Activated CD4-positive, alpha-beta memory T cell treated with anti-CD3 and anti-CD28 coated beads for 36 hours (primary cell): ENCODE measurements at regions of chr12 and their contacts with region 1.

Region 1: GRCh38 chr12:68565375-68565903 is 45.3 kb upstream of the RAP1B start:
- DNase-seq: no peak
- H3K4me3 Mint-ChIP-seq: no peak overlapping the region
- H3K27ac Mint-ChIP-seq: peak overlapping the region; percentile 42
- H3K4me1 Mint-ChIP-seq: peaks cover 21% of the 10 kb centered on the region
- H3K27me3 Mint-ChIP-seq: no peaks in the 10 kb centered on the region

Region 2: GRCh38 chr12:68602720-68603119 is 37.3 kb after region 1 on chr12:
- CTCF ChIA-PET with region 1: no interaction called
- POLR2A ChIA-PET with region 1: no interaction called
- intact Hi-C with region 1: no loop called
- DNase-seq: no peak
- H3K4me3 Mint-ChIP-seq: no peak overlapping the region
- H3K27ac Mint-ChIP-seq: no peak overlapping the region
- H3K4me1 Mint-ChIP-seq: peaks cover 31% of the 10 kb centered on the region
- H3K27me3 Mint-ChIP-seq: no peaks in the 10 kb centered on the region

Region 3: DNA sequence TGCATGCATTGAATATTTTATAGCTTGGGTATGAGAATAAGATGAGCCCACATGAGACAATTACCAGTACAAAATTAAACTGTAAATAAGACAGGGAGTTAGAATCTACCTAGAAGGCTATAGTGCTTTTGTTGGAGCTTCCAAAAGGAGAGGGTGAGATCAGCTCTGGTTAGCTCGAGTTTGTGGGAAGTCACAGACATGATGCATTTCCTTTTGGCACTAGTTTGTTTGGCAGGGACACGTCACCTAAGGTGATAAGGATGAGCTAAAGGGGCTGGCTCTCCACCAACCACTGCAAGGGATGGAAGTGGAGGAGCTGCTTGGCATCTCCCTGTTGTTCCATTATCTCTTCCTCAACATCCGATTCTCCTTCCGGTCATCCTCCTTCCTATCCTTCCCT is 416.1 kb after region 1 on chr12:
- CTCF ChIA-PET with region 1: no interaction called
- POLR2A ChIA-PET with region 1: no interaction called
- intact Hi-C with region 1: no loop called
- DNase-seq: no peak
- H3K4me3 Mint-ChIP-seq: no peak overlapping the region
- H3K27ac Mint-ChIP-seq: no peak overlapping the region
- H3K4me1 Mint-ChIP-seq: no peaks in the 10 kb centered on the region
- H3K27me3 Mint-ChIP-seq: peaks cover 7% of the 10 kb centered on the region

Region 4: DNA sequence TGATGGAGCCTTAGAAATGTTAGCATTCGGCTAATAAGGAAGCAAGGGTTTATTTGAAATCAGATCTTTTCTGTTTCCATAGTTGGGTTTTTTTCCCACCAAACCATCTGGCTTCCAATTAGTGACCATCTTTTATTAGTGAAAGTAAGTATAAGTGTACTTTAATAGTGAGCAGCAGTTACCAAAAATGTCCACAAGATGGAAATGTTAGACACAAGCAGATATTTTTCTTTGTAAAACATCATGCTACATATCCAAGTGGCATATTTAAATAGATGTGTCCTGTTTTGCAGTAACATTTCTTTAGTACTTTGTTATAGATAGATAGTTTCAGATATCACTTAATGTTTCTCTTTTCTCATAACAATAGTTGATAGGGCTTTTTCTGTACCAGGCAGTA is 822.9 kb after region 1 on chr12:
- CTCF ChIA-PET with region 1: no interaction called
- POLR2A ChIA-PET with region 1: no interaction called
- intact Hi-C with region 1: loop called (anchors 10 kb)
- DNase-seq: no peak
- H3K4me3 Mint-ChIP-seq: no peak overlapping the region
- H3K27ac Mint-ChIP-seq: no peak overlapping the region
- H3K4me1 Mint-ChIP-seq: peaks cover 21% of the 10 kb centered on the region
- H3K27me3 Mint-ChIP-seq: no peaks in the 10 kb centered on the region